Activated CD8-positive, alpha-beta memory T cell treated with anti-CD3 and anti-CD28 coated beads, Interleukin-2, amount 10 ng/mL, durations not matched to agents 7 days and 5 days (primary cell): ENCODE measurements at regions of chr22 and their contacts with region 1.

Region 1: GRCh38 chr22:37566903-37567820 is 6.9 kb downstream of the CDC42EP1 start:
- DNase-seq: peak; percentile 98
- ATAC-seq: peak; percentile 90
- H3K4me3 Mint-ChIP-seq: peak overlapping the region; percentile 45
- H3K27ac Mint-ChIP-seq: peak overlapping the region; percentile 86
- H3K4me1 Mint-ChIP-seq: peaks cover 28% of the 10 kb centered on the region
- H3K27me3 Mint-ChIP-seq: peaks cover 38% of the 10 kb centered on the region

Region 2: DNA sequence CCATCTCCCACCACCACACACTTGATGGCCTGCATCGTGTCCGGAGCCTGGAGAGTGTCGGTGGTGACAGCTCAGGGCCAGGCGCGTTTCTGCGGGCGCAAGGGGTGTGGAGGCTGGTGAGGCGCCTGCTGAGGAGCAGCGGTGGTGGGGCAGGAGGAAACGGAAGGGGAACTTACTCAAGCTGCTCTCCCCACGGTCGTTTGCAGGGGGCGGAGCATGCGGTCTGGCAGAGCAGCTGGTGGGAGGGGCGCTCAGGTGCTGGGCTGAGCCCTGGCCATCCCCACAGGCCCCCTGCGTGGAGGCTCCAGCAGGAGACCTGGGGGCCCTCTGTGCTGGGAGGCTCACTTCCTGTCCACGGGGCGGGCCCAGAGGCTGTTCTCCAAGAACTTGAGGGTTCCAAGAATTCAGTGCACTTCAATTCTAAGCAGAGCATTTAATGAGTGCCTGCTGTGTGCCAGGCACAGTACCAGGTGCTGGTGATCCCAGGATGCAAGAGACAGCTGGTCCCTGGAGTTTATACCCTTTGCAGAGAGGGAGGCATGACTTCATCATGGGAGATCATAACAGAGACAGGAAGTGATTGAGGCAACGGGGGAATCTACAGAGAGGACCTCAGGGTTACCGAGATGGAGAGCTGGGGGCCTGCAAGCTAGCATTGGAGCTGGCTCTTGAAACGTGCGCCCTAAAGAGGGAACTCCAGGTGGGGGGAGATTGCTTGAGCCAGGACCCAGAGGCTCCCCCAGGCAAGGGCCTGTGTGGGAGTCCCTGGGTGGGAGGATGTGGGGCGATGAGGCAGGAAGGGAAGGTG is 322.8 kb before region 1 on chr22 and contains the start of gene RAC2:
- CTCF ChIA-PET with region 1: interaction called, 16 read pairs
- DNase-seq: peak; percentile 97
- ATAC-seq: peak; percentile 60
- H3K4me3 Mint-ChIP-seq: peak within 1 kb of the TSS; percentile 100
- H3K27ac Mint-ChIP-seq: peak within 1 kb of the TSS; percentile 98
- H3K4me1 Mint-ChIP-seq: peaks cover 49% of the 10 kb centered on the region
- H3K27me3 Mint-ChIP-seq: no peaks in the 10 kb centered on the region
- total RNA-seq, gene RAC2: 834 to 907 TPM

Region 3: DNA sequence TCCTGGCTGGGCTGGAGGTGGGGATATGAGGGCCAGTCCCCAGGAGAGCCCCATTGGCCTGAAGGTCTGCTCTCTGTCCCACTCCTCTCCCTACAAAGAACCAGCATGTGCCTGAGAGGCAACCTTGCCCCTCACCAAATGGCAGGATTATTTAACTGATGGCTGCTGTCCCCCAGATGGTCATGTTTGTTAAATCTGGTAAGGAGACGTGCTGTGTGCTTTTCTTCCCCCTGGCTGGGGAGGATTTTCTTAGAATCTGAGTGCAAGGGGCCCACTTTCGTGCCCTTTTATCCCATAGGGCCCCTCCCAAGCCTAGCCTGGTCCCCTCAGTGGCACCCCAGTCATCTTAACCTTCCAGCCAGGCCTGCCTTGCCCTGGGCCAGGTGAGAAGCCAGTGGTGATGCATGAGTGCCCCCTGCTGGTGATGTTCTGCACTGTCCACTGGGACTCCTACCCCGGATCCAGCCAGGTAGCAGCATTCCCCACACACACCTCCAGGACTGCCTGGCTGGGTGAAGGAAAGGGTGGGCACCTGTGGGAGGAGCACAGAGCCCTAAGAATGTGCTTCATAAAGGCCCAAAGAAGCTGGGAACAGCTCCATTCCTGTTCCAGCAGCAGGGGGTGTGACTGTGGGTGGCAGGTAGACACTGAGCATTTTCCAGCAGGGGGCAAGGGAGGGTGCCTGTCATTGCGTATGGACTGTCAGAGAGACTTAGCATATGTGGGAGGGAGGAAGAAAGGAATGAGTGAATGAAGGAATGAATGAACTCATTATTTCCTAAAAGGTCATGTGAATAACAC is 109.9 kb before region 1 on chr22:
- CTCF ChIA-PET with region 1: interaction called, 13 read pairs
- DNase-seq: peak; percentile 87
- ATAC-seq: peak; percentile 98
- H3K4me3 Mint-ChIP-seq: no peak overlapping the region
- H3K27ac Mint-ChIP-seq: no peak overlapping the region
- H3K4me1 Mint-ChIP-seq: no peaks in the 10 kb centered on the region
- H3K27me3 Mint-ChIP-seq: no peaks in the 10 kb centered on the region

Region 4: GRCh38 chr22:37486224-37486845 is 80.8 kb before region 1 on chr22 and contains the start of gene MFNG:
- CTCF ChIA-PET with region 1: interaction called, 11 read pairs
- DNase-seq: peak; percentile 83
- ATAC-seq: peak; percentile 66
- H3K4me3 Mint-ChIP-seq: peak within 1 kb of the TSS; percentile 94
- H3K27ac Mint-ChIP-seq: peak within 1 kb of the TSS; percentile 88
- H3K4me1 Mint-ChIP-seq: peaks cover 47% of the 10 kb centered on the region
- H3K27me3 Mint-ChIP-seq: no peaks in the 10 kb centered on the region
- total RNA-seq, gene MFNG: 196 to 220 TPM

Region 5: GRCh38 chr22:37581504-37581903 is 14.3 kb after region 1 on chr22:
- CTCF ChIA-PET with region 1: interaction called, 25 read pairs
- DNase-seq: no peak
- ATAC-seq: no peak
- H3K4me3 Mint-ChIP-seq: no peak overlapping the region
- H3K27ac Mint-ChIP-seq: no peak overlapping the region
- H3K4me1 Mint-ChIP-seq: peaks cover 16% of the 10 kb centered on the region
- H3K27me3 Mint-ChIP-seq: peaks cover 27% of the 10 kb centered on the region

Region 6: DNA sequence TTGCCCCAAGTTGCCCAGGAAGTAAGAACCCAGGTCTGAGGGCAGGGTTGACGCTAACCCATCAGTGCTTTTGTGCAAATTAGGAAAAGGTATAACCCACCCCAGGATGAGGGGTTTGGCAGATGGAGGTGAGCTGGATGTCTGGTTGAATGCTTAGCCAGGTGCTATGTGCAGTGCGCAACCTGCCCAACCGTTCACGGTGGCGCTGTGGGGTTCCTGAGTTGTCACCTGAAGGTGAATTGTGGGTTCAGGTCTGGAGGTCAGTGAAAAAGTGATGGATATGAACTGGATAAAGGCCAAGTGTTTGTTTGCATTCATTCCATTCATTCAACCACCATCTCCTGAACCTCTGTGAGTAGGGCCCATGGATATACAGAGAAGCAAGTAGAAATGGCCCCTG is 27.1 kb after region 1 on chr22:
- CTCF ChIA-PET with region 1: interaction called, 62 read pairs
- DNase-seq: no peak
- ATAC-seq: no peak
- H3K4me3 Mint-ChIP-seq: no peak overlapping the region
- H3K27ac Mint-ChIP-seq: no peak overlapping the region
- H3K4me1 Mint-ChIP-seq: peaks cover 15% of the 10 kb centered on the region
- H3K27me3 Mint-ChIP-seq: no peaks in the 10 kb centered on the region

Region 7: DNA sequence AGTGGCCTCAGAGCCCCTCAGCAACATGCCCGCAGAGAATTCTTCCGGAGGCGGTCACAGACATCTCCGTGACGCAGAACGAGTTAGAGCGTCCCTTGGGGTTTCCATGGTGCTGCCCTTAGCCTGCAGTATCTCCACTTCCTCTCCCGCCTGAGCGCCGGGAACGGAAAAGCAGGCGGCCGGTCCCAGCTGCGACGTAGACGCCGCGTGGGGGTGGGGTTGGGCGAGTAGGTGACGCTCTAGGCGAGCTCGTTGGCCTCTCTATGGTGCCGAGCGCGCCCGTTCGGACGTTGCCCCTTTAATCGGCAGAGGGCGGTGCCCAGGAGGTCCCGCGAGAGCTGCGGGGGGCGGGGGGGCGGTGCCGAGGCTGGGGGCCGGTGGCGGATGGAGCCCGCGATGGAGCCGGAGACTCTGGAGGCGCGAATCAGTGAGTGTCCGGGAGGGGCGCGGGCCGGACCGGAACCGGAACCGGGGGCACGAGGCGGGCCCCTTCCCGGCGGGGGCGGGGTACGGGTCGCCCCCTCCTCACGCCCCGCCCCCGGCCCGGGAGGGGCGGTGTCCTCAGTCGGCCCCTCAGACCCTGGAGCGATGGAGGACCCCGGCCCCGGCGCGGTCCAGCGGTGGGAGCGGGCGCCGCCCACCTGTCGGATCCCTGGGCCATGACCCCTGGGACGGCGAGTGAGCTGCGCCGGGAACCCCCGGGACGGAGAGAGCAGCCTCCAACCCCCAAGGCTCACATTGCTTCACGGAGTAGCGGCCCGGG is 41.5 kb after region 1 on chr22 and contains the start of gene GGA1:
- CTCF ChIA-PET with region 1: interaction called, 41 read pairs
- DNase-seq: peak; percentile 99
- ATAC-seq: peak; percentile 80
- H3K4me3 Mint-ChIP-seq: peak within 1 kb of the TSS; percentile 89
- H3K27ac Mint-ChIP-seq: peak within 1 kb of the TSS; percentile 94
- H3K4me1 Mint-ChIP-seq: peaks cover 60% of the 10 kb centered on the region
- H3K27me3 Mint-ChIP-seq: no peaks in the 10 kb centered on the region
- total RNA-seq, gene GGA1: 76.9 to 85.9 TPM

Region 8: GRCh38 chr22:37619991-37620390 is 52.8 kb after region 1 on chr22:
- CTCF ChIA-PET with region 1: no interaction called
- DNase-seq: no peak
- ATAC-seq: no peak
- H3K4me3 Mint-ChIP-seq: no peak overlapping the region
- H3K27ac Mint-ChIP-seq: peak overlapping the region; percentile 34
- H3K4me1 Mint-ChIP-seq: peaks cover 10% of the 10 kb centered on the region
- H3K27me3 Mint-ChIP-seq: no peaks in the 10 kb centered on the region

Region 9: GRCh38 chr22:37741312-37741795 is 174.2 kb after region 1 on chr22:
- CTCF ChIA-PET with region 1: no interaction called
- DNase-seq: no peak
- ATAC-seq: no peak
- H3K4me3 Mint-ChIP-seq: no peak overlapping the region
- H3K27ac Mint-ChIP-seq: no peak overlapping the region
- H3K4me1 Mint-ChIP-seq: peaks cover 22% of the 10 kb centered on the region
- H3K27me3 Mint-ChIP-seq: no peaks in the 10 kb centered on the region